ENCODE measurements at regions of chr4 and their contacts with region 1.

Region 1: DNA sequence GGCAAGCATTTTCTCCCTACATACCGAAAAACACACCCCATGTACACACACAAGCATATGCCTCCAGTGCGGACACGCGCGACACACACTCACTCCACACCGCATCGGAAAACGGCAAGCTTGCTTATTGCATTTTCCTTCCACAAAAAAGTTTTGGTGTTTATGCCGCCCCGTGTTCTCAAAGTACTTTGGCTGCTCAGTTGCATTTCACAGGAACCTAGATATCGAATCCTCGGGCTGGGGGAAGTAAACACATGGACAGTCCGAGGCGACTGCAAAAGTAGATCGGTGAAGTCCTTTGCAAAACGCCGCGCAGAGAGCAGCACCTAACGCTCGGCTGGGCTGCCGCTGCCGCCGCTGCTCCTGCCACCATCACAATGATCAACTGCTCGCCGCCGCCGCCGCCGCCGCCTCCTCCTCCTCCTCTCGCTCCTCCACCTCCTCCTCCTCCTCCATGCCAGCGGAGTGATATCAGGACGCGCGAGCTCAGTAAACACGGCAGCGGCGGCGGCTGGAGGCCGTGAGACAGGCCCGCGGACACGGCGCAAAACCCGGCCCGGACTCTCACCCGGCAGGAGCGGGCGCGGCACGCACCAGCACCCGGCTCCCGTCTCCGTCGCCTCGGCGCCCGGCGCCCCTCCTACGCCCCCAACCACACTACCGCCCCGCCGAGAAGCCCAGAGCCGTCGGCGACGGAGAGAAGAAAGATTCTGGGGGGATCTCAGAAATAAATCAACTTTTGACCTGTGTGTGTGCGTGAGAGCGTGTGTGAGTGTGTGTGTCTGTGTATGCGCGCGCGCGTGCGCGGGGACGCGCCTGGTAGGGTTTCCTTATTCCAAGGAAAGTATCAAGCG is at the start of gene MAML3:
- DNase-seq: peak; percentile 95 to 98 (median 97)
- ATAC-seq: peak; percentile 63 to 79 (median 74)
- H3K4me3 ChIP-seq: peak within 1 kb of the TSS; percentile 35 to 92 (median 83)
- H3K27ac ChIP-seq: peak within 1 kb of the TSS; percentile 83 to 100 (median 98)
- H3K4me1 ChIP-seq: peaks cover 0 to 21% (median 9%) of the 10 kb centered on the region in 12 donors
- H3K27me3 ChIP-seq: no peaks in the 10 kb centered on the region
- CTCF ChIP-seq: no peak
- POLR2A ChIP-seq: peak in 1 of 2 donors; percentile 86
- total RNA-seq, gene MAML3: 1.7 to 5.9 (median 3.1) TPM

Region 2: GRCh38 chr4:139450586-139450985 is 703.4 kb before region 1 on chr4:
- intact Hi-C with region 1: no loop called
- DNase-seq: no peak
- ATAC-seq: no peak
- H3K4me3 ChIP-seq: no peak overlapping the region
- H3K27ac ChIP-seq: no peak overlapping the region
- H3K4me1 ChIP-seq: peaks cover 2 to 29% (median 14%) of the 10 kb centered on the region in 12 donors
- H3K27me3 ChIP-seq: no peaks in the 10 kb centered on the region
- CTCF ChIP-seq: no peak
- POLR2A ChIP-seq: no peak

Region 3: GRCh38 chr4:139651282-139652194 is 502.4 kb before region 1 on chr4:
- intact Hi-C with region 1: loop called in 2 of 10 experiments (anchors 10 kb)
- DNase-seq: peak; percentile 81 to 92 (median 84)
- ATAC-seq: peak; percentile 75 to 90 (median 86)
- H3K4me3 ChIP-seq: peak overlapping the region in 5 of 12 donors; percentile 6 to 43 (median 26)
- H3K27ac ChIP-seq: no peak overlapping the region
- H3K4me1 ChIP-seq: peaks cover 0 to 10% (median under 1%) of the 10 kb centered on the region in 12 donors
- H3K27me3 ChIP-seq: no peaks in the 10 kb centered on the region
- CTCF ChIP-seq: peak; percentile 85 to 96 (median 92)
- POLR2A ChIP-seq: no peak

Region 4: GRCh38 chr4:139734875-139735380 is 419.0 kb before region 1 on chr4:
- intact Hi-C with region 1: loop called (anchors 1 to 5 kb)
- DNase-seq: peak; percentile 92 to 93 (median 93)
- ATAC-seq: peak; percentile 93 to 96 (median 96)
- H3K4me3 ChIP-seq: peak overlapping the region; percentile 3 to 70 (median 54)
- H3K27ac ChIP-seq: peak overlapping the region; percentile 53 to 93 (median 82)
- H3K4me1 ChIP-seq: peaks cover 0 to 57% (median 34%) of the 10 kb centered on the region in 12 donors
- H3K27me3 ChIP-seq: no peaks in the 10 kb centered on the region
- CTCF ChIP-seq: peak; percentile 73 to 97 (median 92)
- POLR2A ChIP-seq: peak in 1 of 2 donors; percentile 27

Region 5: DNA sequence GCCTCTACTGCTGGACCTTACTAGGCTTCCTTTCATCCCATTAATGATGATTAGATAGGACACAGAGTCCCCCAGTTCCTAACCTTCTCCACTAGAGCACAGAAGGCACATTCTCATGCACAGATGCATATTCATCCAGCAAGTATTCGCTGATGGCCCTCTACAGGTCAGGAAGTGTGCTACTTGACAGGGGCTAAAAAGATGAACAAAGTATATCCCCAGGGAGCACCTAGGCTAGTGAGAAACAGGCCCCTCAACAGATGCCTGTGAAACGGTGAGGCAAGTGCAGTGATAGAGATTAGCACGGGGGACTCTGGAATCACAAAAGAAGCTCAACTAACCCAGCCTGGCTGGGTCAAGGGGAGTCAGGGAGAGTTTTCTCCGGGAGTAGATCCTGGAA is 392.5 kb before region 1 on chr4:
- intact Hi-C with region 1: loop called in 1 of 10 experiments (anchors 5 kb)
- DNase-seq: no peak
- ATAC-seq: peak in 3 of 4 donors; percentile 7 to 14 (median 13)
- H3K4me3 ChIP-seq: no peak overlapping the region
- H3K27ac ChIP-seq: peak overlapping the region in 10 of 12 donors; percentile 12 to 96 (median 90)
- H3K4me1 ChIP-seq: peaks cover 13 to 64% (median 47%) of the 10 kb centered on the region in 12 donors
- H3K27me3 ChIP-seq: no peaks in the 10 kb centered on the region
- CTCF ChIP-seq: peak in 9 of 12 donors; percentile 9 to 53 (median 33)
- POLR2A ChIP-seq: no peak

Region 6: GRCh38 chr4:140012688-140013486 is 141.1 kb before region 1 on chr4:
- intact Hi-C with region 1: loop called in 2 of 10 experiments (anchors 5 to 10 kb)
- DNase-seq: peak in 4 of 5 donors; percentile 40 to 64 (median 57)
- ATAC-seq: peak; percentile 71 to 90 (median 88)
- H3K4me3 ChIP-seq: peak overlapping the region in 1 of 12 donors; percentile 22
- H3K27ac ChIP-seq: no peak overlapping the region
- H3K4me1 ChIP-seq: peaks cover 0 to 10% (median 0%) of the 10 kb centered on the region in 12 donors
- H3K27me3 ChIP-seq: no peaks in the 10 kb centered on the region
- CTCF ChIP-seq: peak; percentile 27 to 71 (median 54)
- POLR2A ChIP-seq: no peak

Region 7: GRCh38 chr4:140095694-140096482 is 58.1 kb before region 1 on chr4:
- intact Hi-C with region 1: loop called (anchors 1 to 5 kb)
- DNase-seq: peak in 4 of 5 donors; percentile 52 to 69 (median 58)
- ATAC-seq: peak in 3 of 4 donors; percentile 41 to 72 (median 59)
- H3K4me3 ChIP-seq: peak overlapping the region in 7 of 12 donors; percentile 11 to 35 (median 16)
- H3K27ac ChIP-seq: peak overlapping the region; percentile 38 to 88 (median 82)
- H3K4me1 ChIP-seq: peaks cover 7 to 99% (median 74%) of the 10 kb centered on the region in 12 donors
- H3K27me3 ChIP-seq: no peaks in the 10 kb centered on the region
- CTCF ChIP-seq: no peak
- POLR2A ChIP-seq: peak in 1 of 2 donors; percentile 43

Region 8: GRCh38 chr4:140109737-140110136 is 44.2 kb before region 1 on chr4:
- intact Hi-C with region 1: no loop called
- DNase-seq: no peak
- ATAC-seq: no peak
- H3K4me3 ChIP-seq: no peak overlapping the region
- H3K27ac ChIP-seq: no peak overlapping the region
- H3K4me1 ChIP-seq: no peaks in the 10 kb centered on the region
- H3K27me3 ChIP-seq: no peaks in the 10 kb centered on the region
- CTCF ChIP-seq: no peak
- POLR2A ChIP-seq: no peak

Region 9: DNA sequence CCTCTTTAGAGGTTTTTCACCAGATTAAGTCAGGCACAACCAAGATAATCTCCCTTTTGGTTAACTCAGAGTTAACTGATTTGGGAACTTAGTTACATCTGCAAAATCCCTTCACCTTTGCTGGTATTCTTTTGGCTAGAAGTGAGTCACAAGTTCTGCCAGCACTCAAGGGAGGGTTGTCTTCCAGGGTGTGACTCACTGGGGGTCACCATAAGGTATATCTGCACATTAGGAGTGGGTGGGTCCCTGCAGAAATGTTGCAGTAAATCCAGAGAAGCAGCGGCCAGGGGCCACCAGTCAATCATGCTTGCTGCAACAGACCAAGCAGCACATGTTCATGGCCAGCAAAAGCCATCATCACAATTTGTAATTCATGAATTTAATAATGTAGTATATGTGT is 59.8 kb after region 1 on chr4:
- intact Hi-C with region 1: no loop called
- DNase-seq: no peak
- ATAC-seq: no peak
- H3K4me3 ChIP-seq: no peak overlapping the region
- H3K27ac ChIP-seq: no peak overlapping the region
- H3K4me1 ChIP-seq: no peaks in the 10 kb centered on the region
- H3K27me3 ChIP-seq: no peaks in the 10 kb centered on the region
- CTCF ChIP-seq: no peak
- POLR2A ChIP-seq: no peak

Region 10: GRCh38 chr4:140326395-140326993 is 172.5 kb after region 1 on chr4:
- intact Hi-C with region 1: loop called in 4 of 10 experiments (anchors 10 kb)
- DNase-seq: peak in 1 of 5 donors; percentile 22
- ATAC-seq: peak in 3 of 4 donors; percentile 63 to 75 (median 71)
- H3K4me3 ChIP-seq: no peak overlapping the region
- H3K27ac ChIP-seq: no peak overlapping the region
- H3K4me1 ChIP-seq: peaks cover 0 to 7% (median 0%) of the 10 kb centered on the region in 12 donors
- H3K27me3 ChIP-seq: no peaks in the 10 kb centered on the region
- CTCF ChIP-seq: peak; percentile 42 to 79 (median 70)
- POLR2A ChIP-seq: no peak